Naive thymus-derived CD4-positive, alpha-beta T cell (primary cell): ENCODE measurements at regions of chr3 and their contacts with region 1.

Region 1: DNA sequence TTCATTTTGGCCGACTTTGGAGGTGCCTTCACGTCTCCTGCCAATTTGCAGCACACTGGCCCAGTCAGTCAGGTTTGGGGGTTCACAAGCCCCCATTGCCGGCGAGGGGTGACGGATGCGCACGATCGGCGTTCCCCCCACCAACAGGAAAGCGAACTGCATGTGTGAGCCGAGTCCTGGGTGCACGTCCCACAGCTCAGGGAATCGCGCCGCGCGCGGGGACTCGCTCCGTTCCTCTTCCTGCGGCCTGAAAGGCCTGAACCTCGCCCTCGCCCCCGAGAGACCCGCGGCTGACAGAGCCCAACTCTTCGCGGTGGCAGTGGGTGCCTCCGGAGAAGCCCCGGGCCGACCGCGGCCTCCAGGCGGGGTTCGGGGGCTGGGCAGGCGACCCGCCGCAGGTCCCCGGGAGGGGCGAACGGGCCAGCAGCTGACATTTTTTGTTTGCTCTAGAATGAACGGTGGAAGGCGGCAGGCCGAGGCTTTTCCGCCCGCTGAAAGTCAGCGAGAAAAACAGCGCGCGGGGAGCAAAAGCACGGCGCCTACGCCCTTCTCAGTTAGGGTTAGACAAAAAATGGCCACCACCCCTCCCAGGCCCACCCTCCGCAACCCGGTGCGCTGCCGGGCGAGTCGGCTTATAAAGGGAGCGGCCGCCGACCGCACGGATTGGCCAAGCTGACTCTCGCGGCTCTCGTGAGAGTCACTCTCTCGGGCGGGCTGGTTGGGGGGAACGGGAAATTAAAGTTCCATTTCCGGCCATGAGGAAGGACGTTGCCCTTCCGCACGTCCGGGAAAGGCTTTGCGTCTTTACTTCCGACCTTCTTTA is at the start of gene TERC:
- DNase-seq: peak; percentile 72 to 96 (median 94)
- ATAC-seq: peak; percentile 91
- H3K4me3 ChIP-seq: peak within 1 kb of the TSS; percentile 88
- H3K4me3 Mint-ChIP-seq: peak within 1 kb of the TSS; percentile 89 to 99 (median 98)
- H3K27ac ChIP-seq: peak within 1 kb of the TSS; percentile 98
- H3K27ac Mint-ChIP-seq: peak within 1 kb of the TSS; percentile 96 to 100 (median 99)
- H3K4me1 ChIP-seq: peaks cover 11 to 18% of the 10 kb centered on the region in 2 donors
- H3K4me1 Mint-ChIP-seq: peaks cover 6 to 39% (median 33%) of the 10 kb centered on the region in 7 donors
- H3K27me3 ChIP-seq: no peaks in the 10 kb centered on the region
- H3K27me3 Mint-ChIP-seq: no peaks in the 10 kb centered on the region
- total RNA-seq, gene TERC: 4.0 to 19.4 (median 7.4) TPM

Region 2: DNA sequence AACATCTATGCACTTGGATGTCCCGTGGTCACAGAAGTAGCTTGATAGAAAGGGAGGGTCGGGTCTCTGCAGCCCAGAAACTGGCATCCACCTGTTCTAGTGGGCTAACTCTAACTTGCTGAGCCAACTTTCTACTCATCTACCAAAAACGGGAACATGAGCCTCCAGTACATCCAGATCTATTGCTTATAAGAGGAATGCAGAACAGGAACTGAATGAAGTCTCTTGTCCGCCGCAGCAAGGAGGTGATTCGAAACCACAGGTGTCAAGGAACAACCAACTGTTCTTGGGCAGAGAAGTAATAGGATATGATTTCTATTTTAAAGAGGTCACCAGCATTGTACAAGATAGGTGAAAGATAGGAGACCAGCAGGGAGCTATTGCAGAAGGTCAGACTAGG is 17.7 kb before region 1 on chr3:
- CTCF ChIA-PET with region 1: no interaction called
- POLR2A ChIA-PET with region 1: no interaction called
- intact Hi-C with region 1: no loop called
- DNase-seq: no peak
- ATAC-seq: no peak
- H3K4me3 ChIP-seq: no peak overlapping the region
- H3K4me3 Mint-ChIP-seq: no peak overlapping the region
- H3K27ac ChIP-seq: no peak overlapping the region
- H3K27ac Mint-ChIP-seq: no peak overlapping the region
- H3K4me1 ChIP-seq: no peaks in the 10 kb centered on the region
- H3K4me1 Mint-ChIP-seq: peaks cover 0 to 13% (median 5%) of the 10 kb centered on the region in 7 donors
- H3K27me3 ChIP-seq: no peaks in the 10 kb centered on the region
- H3K27me3 Mint-ChIP-seq: peaks cover 23 to 40% (median 29%) of the 10 kb centered on the region in 5 donors

Region 3: GRCh38 chr3:169812332-169813235 is 47.9 kb after region 1 on chr3 and contains the starts of genes LRRC34 and LRRIQ4:
- CTCF ChIA-PET with region 1: no interaction called
- POLR2A ChIA-PET with region 1: interaction called, 4 read pairs
- intact Hi-C with region 1: loop called (anchors 1 kb)
- DNase-seq: peak; percentile 43 to 72 (median 52)
- ATAC-seq: peak; percentile 72
- H3K4me3 ChIP-seq: peak within 1 kb of the TSS; percentile 85
- H3K4me3 Mint-ChIP-seq: peak within 1 kb of the TSS; percentile 79 to 91 (median 86)
- H3K27ac ChIP-seq: peak within 1 kb of the TSS; percentile 59
- H3K27ac Mint-ChIP-seq: peak within 1 kb of the TSS; percentile 3 to 92 (median 71)
- H3K4me1 ChIP-seq: peaks cover 4 to 6% of the 10 kb centered on the region in 2 donors
- H3K4me1 Mint-ChIP-seq: peaks cover 21 to 40% (median 25%) of the 10 kb centered on the region in 7 donors
- H3K27me3 ChIP-seq: no peaks in the 10 kb centered on the region
- H3K27me3 Mint-ChIP-seq: peaks cover 0 to 18% (median 2%) of the 10 kb centered on the region in 5 donors
- total RNA-seq, gene LRRC34: 0.30 to 3.7 (median 0.42) TPM
- total RNA-seq, gene LRRIQ4: 0.12 TPM in 1 of 5 experiments, not detected in the others

Region 4: DNA sequence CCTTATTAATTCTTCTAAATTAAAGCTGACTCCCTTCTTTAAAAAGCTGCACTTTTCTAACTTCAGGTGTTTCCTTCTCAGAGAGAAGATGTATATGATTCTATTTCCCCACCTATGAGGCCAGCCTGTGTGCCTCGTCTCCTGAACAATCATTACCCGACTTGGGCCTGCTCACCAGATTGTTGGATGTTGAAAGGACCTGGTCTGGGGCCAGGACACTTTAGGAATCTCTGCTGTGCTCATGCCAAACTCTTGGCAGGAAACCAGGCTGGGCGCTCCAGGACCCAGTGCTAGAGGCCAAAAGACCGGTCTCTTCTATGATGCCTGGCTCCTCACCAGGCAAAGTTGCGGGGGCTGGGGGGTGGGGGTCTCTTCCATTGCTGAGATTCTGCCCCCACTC is 122.0 kb after region 1 on chr3:
- CTCF ChIA-PET with region 1: no interaction called
- POLR2A ChIA-PET with region 1: no interaction called
- intact Hi-C with region 1: no loop called
- DNase-seq: no peak
- ATAC-seq: no peak
- H3K4me3 ChIP-seq: no peak overlapping the region
- H3K4me3 Mint-ChIP-seq: no peak overlapping the region
- H3K27ac ChIP-seq: no peak overlapping the region
- H3K27ac Mint-ChIP-seq: peak overlapping the region in 2 of 9 donors; percentile 26 to 60
- H3K4me1 ChIP-seq: no peaks in the 10 kb centered on the region
- H3K4me1 Mint-ChIP-seq: peaks cover 0 to 11% (median 0%) of the 10 kb centered on the region in 7 donors
- H3K27me3 ChIP-seq: no peaks in the 10 kb centered on the region
- H3K27me3 Mint-ChIP-seq: no peaks in the 10 kb centered on the region

Region 5: GRCh38 chr3:170107941-170108340 is 343.3 kb after region 1 on chr3:
- CTCF ChIA-PET with region 1: interaction called, 5 read pairs
- POLR2A ChIA-PET with region 1: no interaction called
- intact Hi-C with region 1: loop called in 1 of 2 experiments (anchors 5 kb)
- DNase-seq: no peak
- ATAC-seq: no peak
- H3K4me3 ChIP-seq: no peak overlapping the region
- H3K4me3 Mint-ChIP-seq: no peak overlapping the region
- H3K27ac ChIP-seq: no peak overlapping the region
- H3K27ac Mint-ChIP-seq: peak overlapping the region in 3 of 9 donors; percentile 13 to 50 (median 44)
- H3K4me1 ChIP-seq: peaks cover 0 to 12% of the 10 kb centered on the region in 2 donors
- H3K4me1 Mint-ChIP-seq: peaks cover 17 to 45% (median 31%) of the 10 kb centered on the region in 7 donors
- H3K27me3 ChIP-seq: no peaks in the 10 kb centered on the region
- H3K27me3 Mint-ChIP-seq: no peaks in the 10 kb centered on the region

Region 6: DNA sequence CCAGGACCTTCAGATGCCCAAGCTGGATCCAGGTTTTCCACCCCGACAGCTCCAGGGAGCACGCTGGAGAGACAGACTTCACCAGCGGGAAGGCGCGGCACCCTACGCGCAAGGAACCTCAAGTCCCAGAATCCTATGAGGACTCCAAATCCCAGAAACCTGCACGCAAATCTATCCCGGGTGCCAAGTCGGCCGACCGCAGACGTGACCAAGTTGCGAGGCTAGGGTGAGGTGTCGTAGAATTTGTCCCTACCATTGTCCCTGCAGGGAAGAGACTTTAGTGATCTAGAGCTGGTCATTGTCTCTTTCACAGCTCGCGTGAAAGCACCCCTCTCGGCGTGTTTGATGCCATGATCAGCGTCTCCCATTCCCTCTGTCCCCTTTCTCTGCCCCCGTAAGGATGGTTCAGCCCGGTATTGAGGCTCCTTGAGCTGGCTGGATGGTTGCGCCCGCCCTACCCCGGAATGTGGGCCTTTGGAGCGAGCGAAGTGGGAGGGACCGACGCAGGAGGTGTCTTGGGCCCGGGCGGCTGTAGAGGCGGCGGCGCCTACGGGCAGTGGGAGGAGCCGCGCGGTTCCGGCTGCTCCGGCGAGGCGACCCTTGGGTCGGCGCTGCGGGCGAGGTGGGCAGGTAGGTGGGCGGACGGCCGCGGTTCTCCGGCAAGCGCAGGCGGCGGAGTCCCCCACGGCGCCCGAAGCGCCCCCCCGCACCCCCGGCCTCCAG is 457.4 kb after region 1 on chr3 and contains the start of gene PRKCI:
- CTCF ChIA-PET with region 1: interaction called, 3 read pairs
- POLR2A ChIA-PET with region 1: interaction called, 5 read pairs
- intact Hi-C with region 1: loop called (anchors 1 kb)
- DNase-seq: peak; percentile 63 to 88 (median 83)
- ATAC-seq: peak; percentile 96
- H3K4me3 ChIP-seq: peak within 1 kb of the TSS; percentile 98
- H3K4me3 Mint-ChIP-seq: peak within 1 kb of the TSS; percentile 75 to 97 (median 95)
- H3K27ac ChIP-seq: peak within 1 kb of the TSS; percentile 75
- H3K27ac Mint-ChIP-seq: peak within 1 kb of the TSS; percentile 82 to 97 (median 95)
- H3K4me1 ChIP-seq: peaks cover 0 to 3% of the 10 kb centered on the region in 2 donors
- H3K4me1 Mint-ChIP-seq: peaks cover 15 to 50% (median 38%) of the 10 kb centered on the region in 7 donors
- H3K27me3 ChIP-seq: no peaks in the 10 kb centered on the region
- H3K27me3 Mint-ChIP-seq: peaks cover 0 to 4% (median 0%) of the 10 kb centered on the region in 5 donors
- total RNA-seq, gene PRKCI: 14.7 to 26.2 (median 20.5) TPM

Region 7: DNA sequence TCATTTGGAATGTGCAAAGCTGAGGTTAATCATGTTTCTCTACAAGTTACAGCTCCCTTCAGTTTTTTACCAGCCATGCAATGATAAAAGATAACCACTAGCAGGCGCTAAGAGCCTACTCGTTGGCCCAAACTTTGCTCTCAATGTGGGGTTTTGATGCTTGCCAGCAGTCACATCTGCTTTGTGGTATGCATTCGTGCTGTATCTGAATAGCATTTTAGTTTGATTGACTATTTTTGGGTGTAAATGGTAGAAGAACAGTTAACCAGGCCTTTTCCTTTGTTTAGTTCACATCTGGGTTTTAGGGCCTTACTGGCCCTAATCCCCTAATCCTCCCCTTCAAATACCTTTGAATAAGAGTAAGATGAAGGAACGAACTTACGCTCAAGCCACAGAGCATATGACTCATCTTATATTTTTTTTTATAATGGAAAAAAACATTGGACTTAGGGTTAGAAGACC is 649.6 kb after region 1 on chr3:
- CTCF ChIA-PET with region 1: no interaction called
- POLR2A ChIA-PET with region 1: no interaction called
- intact Hi-C with region 1: loop called (anchors 1 to 5 kb)
- DNase-seq: peak in 6 of 9 donors; percentile 25 to 58 (median 48)
- ATAC-seq: peak; percentile 75
- H3K4me3 ChIP-seq: no peak overlapping the region
- H3K4me3 Mint-ChIP-seq: no peak overlapping the region
- H3K27ac ChIP-seq: no peak overlapping the region
- H3K27ac Mint-ChIP-seq: no peak overlapping the region
- H3K4me1 ChIP-seq: peaks cover 4 to 7% of the 10 kb centered on the region in 2 donors
- H3K4me1 Mint-ChIP-seq: peaks cover 5 to 15% (median 7%) of the 10 kb centered on the region in 7 donors
- H3K27me3 ChIP-seq: peaks cover 0 to 8% of the 10 kb centered on the region in 2 donors
- H3K27me3 Mint-ChIP-seq: peaks cover 14 to 40% (median 17%) of the 10 kb centered on the region in 5 donors

Region 8: DNA sequence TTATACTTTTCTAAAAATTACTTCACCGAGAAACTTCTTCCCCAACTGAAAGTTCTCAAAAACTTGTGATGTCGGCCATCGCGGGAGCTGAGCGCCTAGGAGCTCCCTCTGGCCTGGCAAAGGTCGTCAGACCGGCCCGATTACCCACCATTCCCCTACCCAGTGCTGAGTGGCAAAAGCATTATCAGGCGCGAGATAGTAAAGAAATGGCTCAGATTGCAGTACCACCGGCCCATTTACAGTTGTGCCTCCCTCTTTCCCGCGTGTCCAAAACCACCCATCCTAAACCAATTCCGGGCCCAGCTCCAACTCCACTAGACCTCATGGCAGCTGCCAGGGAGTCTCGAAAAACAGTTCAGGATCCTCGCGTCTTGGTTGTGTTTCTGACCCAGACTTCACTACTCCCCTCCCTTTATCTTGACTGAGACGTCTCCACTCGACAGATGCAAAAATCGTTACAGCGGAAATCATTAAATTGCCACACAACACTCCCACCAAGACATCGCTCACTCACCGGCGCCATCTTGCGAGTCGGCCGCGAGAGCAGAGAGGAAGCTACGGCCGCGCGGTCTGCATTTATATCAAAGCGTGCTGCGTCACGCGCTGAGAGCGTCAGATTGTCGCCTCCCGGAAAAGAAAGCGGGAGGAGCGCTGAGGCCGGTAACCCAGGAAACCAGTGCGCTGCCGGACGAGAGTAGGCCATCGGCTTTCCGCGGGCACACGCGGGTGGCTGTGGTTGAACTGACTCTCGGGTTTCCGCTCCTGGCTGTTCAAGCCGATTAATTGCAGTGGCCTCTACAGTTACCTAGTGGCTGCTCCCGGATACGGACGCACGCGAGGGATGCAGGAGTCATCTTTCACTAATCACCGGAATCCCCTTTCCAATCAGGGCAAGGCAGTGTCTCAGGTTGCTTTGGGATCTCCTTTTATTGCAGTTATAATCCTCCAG is 1105.3 kb after region 1 on chr3 and contains the start of gene RPL22L1:
- CTCF ChIA-PET with region 1: no interaction called
- POLR2A ChIA-PET with region 1: no interaction called
- intact Hi-C with region 1: loop called (anchors 1 to 5 kb)
- DNase-seq: peak; percentile 83 to 92 (median 90)
- ATAC-seq: peak; percentile 96
- H3K4me3 ChIP-seq: peak within 1 kb of the TSS; percentile 84
- H3K4me3 Mint-ChIP-seq: peak within 1 kb of the TSS; percentile 93 to 98 (median 94)
- H3K27ac ChIP-seq: peak within 1 kb of the TSS; percentile 86
- H3K27ac Mint-ChIP-seq: peak within 1 kb of the TSS; percentile 96 to 99 (median 98)
- H3K4me1 ChIP-seq: peaks cover 22% of the 10 kb centered on the region in 2 donors
- H3K4me1 Mint-ChIP-seq: peaks cover 10 to 41% (median 26%) of the 10 kb centered on the region in 7 donors
- H3K27me3 ChIP-seq: no peaks in the 10 kb centered on the region
- H3K27me3 Mint-ChIP-seq: peaks cover 0 to 4% (median 0%) of the 10 kb centered on the region in 5 donors
- total RNA-seq, gene RPL22L1: 27.5 to 62.6 (median 47.9) TPM